AG04450 (cell line): ENCODE measurements at regions of chr1 and their contacts with region 1.

Region 1: GRCh38 chr1:198199105-198199504 is 42.3 kb downstream of the NEK7 start:
- DNase-seq: no peak
- H3K4me3 ChIP-seq: no peak overlapping the region
- H3K27ac ChIP-seq: no peak overlapping the region
- H3K27me3 ChIP-seq: no peaks in the 10 kb centered on the region
- CTCF ChIP-seq: no peak

Region 2: DNA sequence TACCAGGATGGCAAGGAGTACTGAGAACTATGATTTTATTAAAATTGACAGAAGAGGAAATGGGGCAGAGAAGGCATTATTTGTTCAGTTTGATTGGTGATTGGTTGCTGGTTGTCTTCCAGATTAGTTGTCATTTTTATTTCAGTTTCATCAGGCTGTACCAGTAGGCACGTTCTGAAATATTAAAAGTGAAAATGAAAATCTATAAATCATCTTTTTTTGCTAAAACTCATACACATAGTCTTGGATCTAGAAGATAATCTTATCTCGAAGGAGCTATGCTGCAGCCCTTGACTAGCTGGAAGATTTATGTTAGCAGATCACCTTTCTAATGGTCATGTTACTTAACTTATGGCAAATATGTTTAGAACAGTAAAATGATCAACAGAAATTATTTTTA is 13.3 kb before region 1 on chr1:
- CTCF ChIA-PET with region 1: interaction called, 3 read pairs
- POLR2A ChIA-PET with region 1: interaction called, 10 read pairs
- DNase-seq: no peak
- H3K4me3 ChIP-seq: no peak overlapping the region
- H3K27ac ChIP-seq: no peak overlapping the region
- H3K27me3 ChIP-seq: no peaks in the 10 kb centered on the region
- CTCF ChIP-seq: no peak